OCI-LY7 (cell line): ENCODE measurements at regions of chr22 and their contacts with region 1.

Region 1: GRCh38 chr22:40024201-40025061 is 29.7 kb downstream of the FAM83F start:
- DNase-seq: peak; percentile 82
- H3K4me3 ChIP-seq: no peak overlapping the region
- H3K27ac ChIP-seq: no peak overlapping the region
- H3K4me1 ChIP-seq: peaks cover 25% of the 10 kb centered on the region
- CTCF ChIP-seq: peak; percentile 97

Region 2: DNA sequence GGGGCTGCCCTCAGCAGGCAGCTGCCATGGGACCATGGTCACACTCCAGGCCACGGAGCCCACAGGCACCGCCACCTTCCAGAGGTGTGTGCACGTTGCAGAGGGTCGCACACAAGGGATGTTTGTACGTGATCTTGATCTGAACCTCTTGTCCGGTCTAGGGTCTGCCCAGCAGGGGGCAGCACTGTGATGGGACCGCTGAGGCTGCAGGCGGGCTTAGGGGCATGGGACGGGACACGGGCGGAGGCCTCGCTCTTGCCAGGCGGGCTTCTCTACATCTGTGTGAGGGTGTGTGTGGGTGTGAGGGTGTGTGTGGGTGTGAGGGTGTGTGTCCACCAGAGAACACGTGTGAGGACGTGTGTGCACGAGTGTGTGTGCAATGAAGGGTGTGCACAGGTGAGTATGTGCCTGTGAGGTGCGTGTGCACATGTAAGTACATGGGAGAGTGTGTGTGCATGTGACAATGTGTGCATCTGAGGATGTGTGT is 401.5 kb before region 1 on chr22:
- CTCF ChIA-PET with region 1: no interaction called
- POLR2A ChIA-PET with region 1: no interaction called
- intact Hi-C with region 1: loop called (anchors 10 kb)
- DNase-seq: no peak
- H3K4me3 ChIP-seq: no peak overlapping the region
- H3K27ac ChIP-seq: no peak overlapping the region
- H3K4me1 ChIP-seq: no peaks in the 10 kb centered on the region
- CTCF ChIP-seq: peak; percentile 65

Region 3: DNA sequence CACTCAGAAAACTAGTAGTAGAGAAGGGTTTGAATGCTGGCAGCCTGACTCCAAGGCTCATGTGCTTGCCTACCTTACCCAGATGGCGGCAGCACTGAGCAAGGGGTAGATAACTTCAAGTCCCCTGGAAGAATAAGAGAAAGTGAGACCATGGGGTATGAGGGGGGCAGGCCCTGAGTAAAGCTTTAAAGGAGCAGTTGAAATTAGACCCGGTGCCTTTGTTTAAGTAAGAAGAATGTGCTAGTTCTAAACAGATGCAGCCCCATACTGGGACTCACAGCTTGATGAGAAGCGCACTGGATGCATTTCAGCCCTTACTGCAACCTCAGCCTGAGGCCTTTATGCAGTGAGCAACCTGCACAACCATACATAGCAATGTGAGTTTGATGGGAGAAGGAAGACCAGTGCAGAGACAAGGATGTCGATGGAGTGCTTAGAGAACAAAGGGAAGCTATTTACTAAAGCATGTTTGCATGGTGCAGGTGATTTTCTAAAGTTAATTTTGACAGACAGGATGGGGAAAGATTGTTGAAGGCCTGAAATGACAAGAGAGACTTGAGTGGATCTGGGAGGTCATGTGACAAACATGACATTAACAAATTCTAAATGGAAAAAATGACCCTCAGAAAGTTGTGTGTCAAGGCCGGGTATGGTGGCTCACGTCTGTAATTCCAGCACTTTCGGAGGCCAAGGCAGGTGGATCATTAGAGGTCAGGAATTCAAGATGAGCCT is 91.3 kb before region 1 on chr22:
- CTCF ChIA-PET with region 1: no interaction called
- POLR2A ChIA-PET with region 1: no interaction called
- intact Hi-C with region 1: loop called (anchors 5 kb)
- DNase-seq: peak; percentile 68
- H3K4me3 ChIP-seq: no peak overlapping the region
- H3K27ac ChIP-seq: no peak overlapping the region
- H3K4me1 ChIP-seq: peaks cover 25% of the 10 kb centered on the region
- CTCF ChIP-seq: peak; percentile 90